ENCODE measurements at regions of chr14 and their contacts with region 1.

Region 1: GRCh38 chr14:50148799-50149198 is 32.4 kb upstream of the VCPKMT start:
- DNase-seq: no peak
- H3K4me3 ChIP-seq: no peak overlapping the region
- H3K27ac ChIP-seq: no peak overlapping the region
- H3K4me1 ChIP-seq: no peaks in the 10 kb centered on the region
- H3K27me3 ChIP-seq: no peaks in the 10 kb centered on the region
- CTCF ChIP-seq: no peak
- POLR2A ChIP-seq: no peak

Region 2: GRCh38 chr14:50260511-50260910 is 111.7 kb after region 1 on chr14:
- intact Hi-C with region 1: loop called (anchors 10 kb)
- DNase-seq: no peak
- H3K4me3 ChIP-seq: no peak overlapping the region
- H3K27ac ChIP-seq: no peak overlapping the region
- H3K4me1 ChIP-seq: no peaks in the 10 kb centered on the region
- H3K27me3 ChIP-seq: no peaks in the 10 kb centered on the region
- CTCF ChIP-seq: peak in 4 of 6 experiments; percentile 24 to 53 (median 34)
- POLR2A ChIP-seq: no peak

Measured in esophagus squamous epithelium (tissue), 5 donors.